Spleen (tissue), 13 donors: ENCODE measurements at regions of chr5 and their contacts with region 1.

Region 1: DNA sequence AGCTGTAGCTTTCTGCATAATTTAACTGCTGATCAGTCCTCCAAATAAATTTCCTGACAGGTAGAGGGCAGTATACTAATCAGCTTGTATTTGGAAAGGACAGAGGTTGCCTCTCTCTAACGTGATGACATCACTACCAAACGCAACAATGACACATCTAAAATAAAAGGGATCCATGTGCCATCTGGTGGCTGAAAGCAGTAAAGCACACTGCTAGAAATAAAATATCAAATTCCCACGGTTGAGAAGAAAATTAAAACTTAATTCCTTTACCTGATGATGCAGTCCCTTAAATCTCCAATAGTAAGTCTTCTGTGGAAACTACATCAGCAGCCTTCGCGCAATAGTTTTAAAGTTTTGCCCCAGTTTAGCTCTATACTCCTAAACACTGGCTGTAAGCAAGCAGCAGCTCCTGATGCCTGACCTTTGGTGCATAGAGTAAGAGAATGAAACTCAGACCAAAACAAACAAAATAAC is 54.5 kb downstream of the DIAPH1 start:
- DNase-seq: no peak
- H3K4me3 ChIP-seq: no peak overlapping the region
- H3K27ac ChIP-seq: peak overlapping the region in 7 of 8 donors; percentile 11 to 75 (median 65)
- H3K4me1 ChIP-seq: peaks cover 0 to 57% (median 19%) of the 10 kb centered on the region in 6 donors
- H3K27me3 ChIP-seq: no peaks in the 10 kb centered on the region
- CTCF ChIP-seq: peak; percentile 67 to 100 (median 93)
- POLR2A ChIP-seq: no peak

Region 2: GRCh38 chr5:141330299-141331080 is 233.8 kb before region 1 on chr5 and contains the start of gene PCDHGA1:
- intact Hi-C with region 1: no loop called
- DNase-seq: no peak
- H3K4me3 ChIP-seq: no peak within 1 kb of the TSS
- H3K27ac ChIP-seq: no peak within 1 kb of the TSS
- H3K4me1 ChIP-seq: no peaks in the 10 kb centered on the region
- H3K27me3 ChIP-seq: peaks cover 0 to 91% (median 18%) of the 10 kb centered on the region in 7 donors
- CTCF ChIP-seq: peak in 2 of 11 experiments; percentile 7 to 14
- POLR2A ChIP-seq: no peak
- total RNA-seq, gene PCDHGA1: 0.17 to 0.52 (median 0.36) TPM in 6 of 7 donors, not detected in the other

Region 3: DNA sequence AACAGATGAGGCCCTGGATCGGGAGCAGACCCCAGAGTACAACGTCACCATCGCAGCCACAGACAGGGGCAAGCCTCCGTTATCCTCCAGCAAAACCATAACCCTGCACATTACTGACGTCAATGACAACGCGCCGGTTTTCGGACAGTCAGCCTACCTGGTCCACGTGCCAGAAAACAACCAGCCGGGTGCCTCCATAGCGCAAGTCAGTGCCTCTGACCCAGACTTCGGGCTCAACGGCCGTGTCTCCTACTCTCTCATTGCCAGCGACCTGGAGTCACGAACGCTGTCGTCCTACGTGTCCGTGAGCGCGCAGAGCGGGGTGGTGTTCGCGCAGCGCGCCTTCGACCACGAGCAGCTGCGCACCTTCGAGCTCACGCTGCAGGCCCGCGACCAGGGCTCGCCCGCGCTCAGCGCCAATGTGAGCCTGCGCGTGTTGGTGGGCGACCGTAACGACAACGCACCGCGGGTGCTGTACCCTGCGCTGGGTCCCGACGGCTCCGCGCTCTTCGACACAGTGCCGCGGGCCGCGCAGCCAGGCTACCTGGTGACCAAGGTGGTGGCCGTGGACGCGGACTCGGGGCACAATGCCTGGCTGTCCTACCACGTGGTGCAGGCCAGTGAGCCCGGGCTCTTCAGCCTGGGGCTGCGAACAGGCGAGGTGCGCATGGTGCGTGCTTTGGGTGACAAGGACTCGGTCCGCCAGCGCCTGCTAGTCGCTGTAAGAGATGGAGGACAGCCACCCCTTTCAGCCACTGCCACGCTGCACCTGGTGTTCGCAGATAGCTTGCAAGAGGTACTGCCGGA is 145.0 kb before region 1 on chr5:
- intact Hi-C with region 1: loop called (anchors 5 kb)
- DNase-seq: no peak
- H3K4me3 ChIP-seq: peak overlapping the region in 1 of 8 donors; percentile 27
- H3K27ac ChIP-seq: no peak overlapping the region
- H3K4me1 ChIP-seq: peaks cover 0 to 18% (median 3%) of the 10 kb centered on the region in 6 donors
- H3K27me3 ChIP-seq: peaks cover 0 to 92% (median 47%) of the 10 kb centered on the region in 7 donors
- CTCF ChIP-seq: no peak
- POLR2A ChIP-seq: no peak